ENCODE measurements at regions of chr2 and their contacts with region 1.

Region 1: GRCh38 chr2:79660557-79660956 is 147.7 kb downstream of the CTNNA2 start:
- DNase-seq: peak; percentile 5
- ATAC-seq: no peak
- H3K4me3 ChIP-seq: no peak overlapping the region
- H3K27ac ChIP-seq: no peak overlapping the region
- H3K4me1 ChIP-seq: no peaks in the 10 kb centered on the region
- H3K27me3 ChIP-seq: no peaks in the 10 kb centered on the region
- CTCF ChIP-seq: peak; percentile 56
- POLR2A ChIP-seq: no peak
- RAD21 ChIP-seq: peak; percentile 70

Region 2: DNA sequence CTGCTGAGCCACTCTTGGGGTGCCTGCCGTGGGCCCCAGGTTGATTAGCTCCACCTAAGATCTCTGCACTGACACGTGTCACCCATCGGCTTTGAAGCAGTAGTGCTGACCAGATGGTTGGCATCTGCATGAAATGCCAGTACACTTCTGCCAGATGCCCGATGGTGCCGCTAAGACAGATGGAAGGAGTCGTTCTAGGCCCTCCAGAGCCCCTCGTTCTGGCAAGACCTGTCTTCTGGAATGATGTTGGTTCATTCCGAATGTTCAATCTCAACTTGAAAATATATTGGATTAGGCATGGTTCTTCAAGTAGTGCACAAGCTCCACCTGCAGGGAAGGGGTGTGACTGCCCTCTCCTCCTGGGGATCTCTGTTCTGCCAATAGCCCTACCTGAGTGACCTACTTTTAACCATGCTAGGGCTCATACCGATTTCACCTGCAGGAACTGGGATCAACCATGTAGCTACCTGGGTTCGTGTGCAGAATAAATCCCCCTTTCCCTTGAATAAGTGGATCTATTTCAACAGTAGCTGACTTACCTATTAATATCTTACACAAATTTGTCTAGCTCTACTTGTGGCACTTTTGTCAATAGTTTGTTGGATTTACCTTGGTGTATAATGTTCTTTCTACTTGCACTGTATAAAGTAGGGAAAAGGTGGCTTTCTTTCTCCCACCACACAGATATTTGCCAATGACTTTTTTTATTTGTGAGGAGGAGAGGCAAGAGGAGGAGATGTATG is 194.9 kb after region 1 on chr2:
- CTCF ChIA-PET with region 1: no interaction called
- POLR2A ChIA-PET with region 1: no interaction called
- dilution Hi-C with region 1: no loop called
- in situ Hi-C with region 1: loop called (anchors 10 kb)
- intact Hi-C with region 1: loop called (anchors 1 kb)
- DNase-seq: peak; percentile 7
- ATAC-seq: no peak
- H3K4me3 ChIP-seq: no peak overlapping the region
- H3K27ac ChIP-seq: no peak overlapping the region
- H3K4me1 ChIP-seq: no peaks in the 10 kb centered on the region
- H3K27me3 ChIP-seq: no peaks in the 10 kb centered on the region
- CTCF ChIP-seq: peak; percentile 53
- POLR2A ChIP-seq: no peak
- RAD21 ChIP-seq: peak; percentile 66

Region 3: GRCh38 chr2:79860228-79861058 is 199.9 kb after region 1 on chr2:
- CTCF ChIA-PET with region 1: no interaction called
- POLR2A ChIA-PET with region 1: no interaction called
- dilution Hi-C with region 1: no loop called
- in situ Hi-C with region 1: loop called (anchors 10 kb)
- intact Hi-C with region 1: loop called (anchors 1 kb)
- DNase-seq: peak; percentile 21
- ATAC-seq: peak; percentile 51; the same call in 1 of the 2 replicates
- H3K4me3 ChIP-seq: no peak overlapping the region
- H3K27ac ChIP-seq: no peak overlapping the region
- H3K4me1 ChIP-seq: no peaks in the 10 kb centered on the region
- H3K27me3 ChIP-seq: no peaks in the 10 kb centered on the region
- CTCF ChIP-seq: peak; percentile 78
- POLR2A ChIP-seq: no peak
- RAD21 ChIP-seq: peak; percentile 79